ENCODE measurements at regions of chr15 and their contacts with region 1.

Region 1: GRCh38 chr15:50051803-50052419 is 67.1 kb downstream of the ATP8B4 start:
- DNase-seq: peak; percentile 59
- H3K4me3 Mint-ChIP-seq: no peak overlapping the region
- H3K27ac Mint-ChIP-seq: no peak overlapping the region
- H3K4me1 Mint-ChIP-seq: no peaks in the 10 kb centered on the region
- H3K27me3 Mint-ChIP-seq: no peaks in the 10 kb centered on the region
- CTCF ChIP-seq: peak; percentile 55

Region 2: DNA sequence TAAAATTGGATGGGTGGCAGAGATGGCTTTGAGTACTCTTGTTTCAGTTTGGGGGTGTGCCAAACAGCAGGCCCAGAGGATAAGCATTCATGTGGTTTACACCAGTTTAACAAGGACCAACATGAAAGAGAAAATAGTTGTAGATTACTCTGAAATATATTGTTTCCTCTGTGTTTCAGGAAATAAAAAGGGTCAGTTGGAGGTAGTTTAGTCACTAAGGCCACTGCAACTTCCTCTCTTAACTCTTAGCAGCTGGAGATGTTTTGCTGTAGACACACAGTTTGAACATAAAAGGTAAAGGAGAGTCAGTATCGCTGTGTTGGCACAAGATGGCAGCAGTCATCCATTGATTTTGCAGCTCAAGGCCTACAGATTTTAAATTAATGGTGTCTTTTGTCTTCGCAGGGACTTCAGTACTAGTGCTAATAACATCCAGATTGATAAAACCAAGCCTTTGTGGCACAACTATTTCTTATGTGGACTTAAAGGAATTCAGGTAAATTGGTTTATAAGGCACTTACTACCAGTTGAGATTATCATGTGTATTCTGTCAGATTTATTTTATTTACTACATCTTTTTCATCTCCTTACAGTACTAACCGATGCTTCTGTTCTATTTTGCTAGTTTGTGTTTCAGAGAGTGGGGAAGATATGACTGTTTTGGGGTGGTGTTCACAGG is 816.3 kb before region 1 on chr15:
- CTCF ChIA-PET with region 1: no interaction called
- intact Hi-C with region 1: loop called (anchors 5 kb)
- DNase-seq: peak; percentile 36
- H3K4me3 Mint-ChIP-seq: no peak overlapping the region
- H3K27ac Mint-ChIP-seq: no peak overlapping the region
- H3K4me1 Mint-ChIP-seq: peaks cover 13% of the 10 kb centered on the region
- H3K27me3 Mint-ChIP-seq: no peaks in the 10 kb centered on the region
- CTCF ChIP-seq: peak; percentile 35

Region 3: GRCh38 chr15:49605588-49605987 is 446.3 kb before region 1 on chr15:
- CTCF ChIA-PET with region 1: no interaction called
- intact Hi-C with region 1: no loop called
- DNase-seq: no peak
- H3K4me3 Mint-ChIP-seq: no peak overlapping the region
- H3K27ac Mint-ChIP-seq: no peak overlapping the region
- H3K4me1 Mint-ChIP-seq: no peaks in the 10 kb centered on the region
- H3K27me3 Mint-ChIP-seq: no peaks in the 10 kb centered on the region
- CTCF ChIP-seq: no peak

Region 4: GRCh38 chr15:49876401-49877038 is 175.4 kb before region 1 on chr15:
- CTCF ChIA-PET with region 1: interaction called, 3 read pairs
- intact Hi-C with region 1: loop called (anchors 2 kb)
- DNase-seq: no peak
- H3K4me3 Mint-ChIP-seq: no peak overlapping the region
- H3K27ac Mint-ChIP-seq: no peak overlapping the region
- H3K4me1 Mint-ChIP-seq: no peaks in the 10 kb centered on the region
- H3K27me3 Mint-ChIP-seq: peaks cover 12% of the 10 kb centered on the region
- CTCF ChIP-seq: no peak

Region 5: GRCh38 chr15:50166216-50166615 is 114.3 kb after region 1 on chr15:
- CTCF ChIA-PET with region 1: no interaction called
- intact Hi-C with region 1: no loop called
- DNase-seq: no peak
- H3K4me3 Mint-ChIP-seq: no peak overlapping the region
- H3K27ac Mint-ChIP-seq: no peak overlapping the region
- H3K4me1 Mint-ChIP-seq: peaks cover 12% of the 10 kb centered on the region
- H3K27me3 Mint-ChIP-seq: no peaks in the 10 kb centered on the region
- CTCF ChIP-seq: no peak

Measured in Calu3 (cell line).